CD8-positive, alpha-beta T cell (primary cell): ENCODE measurements at regions of chr2 and their contacts with region 1.

Region 1: GRCh38 chr2:173965329-173966025 is at the start of gene SP3:
- DNase-seq: peak; percentile 89 to 98 (median 96)
- ATAC-seq: peak; percentile 59
- H3K4me3 ChIP-seq: peak within 1 kb of the TSS; percentile 76 to 89
- H3K4me3 Mint-ChIP-seq: peak within 1 kb of the TSS; percentile 88
- H3K27ac ChIP-seq: peak within 1 kb of the TSS; percentile 86 to 96
- H3K27ac Mint-ChIP-seq: peak within 1 kb of the TSS; percentile 94
- H3K4me1 ChIP-seq: peaks cover 27% of the 10 kb centered on the region
- H3K4me1 Mint-ChIP-seq: peaks cover 33% of the 10 kb centered on the region
- H3K27me3 ChIP-seq: no peaks in the 10 kb centered on the region
- H3K27me3 Mint-ChIP-seq: no peaks in the 10 kb centered on the region
- CTCF ChIP-seq: no peak
- total RNA-seq, gene SP3: 166 to 169 TPM

Region 2: GRCh38 chr2:172972005-172972619 is 993.4 kb before region 1 on chr2:
- CTCF ChIA-PET with region 1: no interaction called
- POLR2A ChIA-PET with region 1: no interaction called
- intact Hi-C with region 1: loop called in 1 of 2 experiments (anchors 10 kb)
- DNase-seq: peak in 7 of 9 experiments; percentile 15 to 54 (median 25)
- ATAC-seq: peak; percentile 32
- H3K4me3 ChIP-seq: no peak overlapping the region
- H3K4me3 Mint-ChIP-seq: no peak overlapping the region
- H3K27ac ChIP-seq: no peak overlapping the region
- H3K27ac Mint-ChIP-seq: no peak overlapping the region
- H3K4me1 ChIP-seq: no peaks in the 10 kb centered on the region
- H3K4me1 Mint-ChIP-seq: peaks cover 18% of the 10 kb centered on the region
- H3K27me3 ChIP-seq: no peaks in the 10 kb centered on the region
- H3K27me3 Mint-ChIP-seq: peaks cover 4% of the 10 kb centered on the region
- CTCF ChIP-seq: peak; percentile 81

Region 3: DNA sequence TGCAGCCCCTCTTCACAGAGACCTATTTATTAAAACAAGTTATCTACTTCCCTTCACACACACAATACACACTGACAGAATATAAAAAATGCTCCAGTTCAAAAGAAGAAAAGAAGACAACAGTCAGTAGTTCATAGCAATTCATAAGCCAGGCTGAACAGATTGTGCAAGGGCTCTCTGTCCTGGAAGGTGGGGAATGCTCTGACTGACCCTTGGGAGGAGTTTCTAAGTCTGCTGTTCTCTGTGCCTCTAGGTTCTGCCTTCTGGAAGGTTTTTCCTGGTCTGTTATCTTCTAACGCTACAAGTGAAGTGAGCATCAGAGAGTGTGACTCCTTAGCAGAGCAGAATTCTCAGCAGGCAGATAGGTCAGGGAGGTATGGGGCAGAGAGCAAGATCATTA is 36.0 kb before region 1 on chr2:
- CTCF ChIA-PET with region 1: interaction called, 4 read pairs
- POLR2A ChIA-PET with region 1: no interaction called
- intact Hi-C with region 1: loop called (anchors 5 kb)
- DNase-seq: no peak
- ATAC-seq: no peak
- H3K4me3 ChIP-seq: no peak overlapping the region
- H3K4me3 Mint-ChIP-seq: no peak overlapping the region
- H3K27ac ChIP-seq: no peak overlapping the region
- H3K27ac Mint-ChIP-seq: peak overlapping the region; percentile 72
- H3K4me1 ChIP-seq: peaks cover 26% of the 10 kb centered on the region
- H3K4me1 Mint-ChIP-seq: peaks cover 74% of the 10 kb centered on the region
- H3K27me3 ChIP-seq: no peaks in the 10 kb centered on the region
- H3K27me3 Mint-ChIP-seq: no peaks in the 10 kb centered on the region
- CTCF ChIP-seq: no peak

Region 4: GRCh38 chr2:174004905-174005605 is 39.6 kb after region 1 on chr2:
- CTCF ChIA-PET with region 1: no interaction called
- POLR2A ChIA-PET with region 1: no interaction called
- intact Hi-C with region 1: loop called in 1 of 2 experiments (anchors 5 kb)
- DNase-seq: no peak
- ATAC-seq: no peak
- H3K4me3 ChIP-seq: no peak overlapping the region
- H3K4me3 Mint-ChIP-seq: no peak overlapping the region
- H3K27ac ChIP-seq: no peak overlapping the region
- H3K27ac Mint-ChIP-seq: no peak overlapping the region
- H3K4me1 ChIP-seq: no peaks in the 10 kb centered on the region
- H3K4me1 Mint-ChIP-seq: no peaks in the 10 kb centered on the region
- H3K27me3 ChIP-seq: no peaks in the 10 kb centered on the region
- H3K27me3 Mint-ChIP-seq: peaks cover 5% of the 10 kb centered on the region
- CTCF ChIP-seq: no peak

Region 5: GRCh38 chr2:174248187-174248997 is 282.9 kb after region 1 on chr2 and contains the start of gene OLA1:
- CTCF ChIA-PET with region 1: no interaction called
- POLR2A ChIA-PET with region 1: interaction called, 5 read pairs
- intact Hi-C with region 1: loop called (anchors 1 to 2 kb)
- DNase-seq: peak; percentile 90 to 98 (median 96)
- ATAC-seq: peak; percentile 96
- H3K4me3 ChIP-seq: peak within 1 kb of the TSS; percentile 78 to 94
- H3K4me3 Mint-ChIP-seq: peak within 1 kb of the TSS; percentile 84
- H3K27ac ChIP-seq: peak within 1 kb of the TSS; percentile 49 to 78
- H3K27ac Mint-ChIP-seq: peak within 1 kb of the TSS; percentile 80
- H3K4me1 ChIP-seq: peaks cover 6% of the 10 kb centered on the region
- H3K4me1 Mint-ChIP-seq: peaks cover 31% of the 10 kb centered on the region
- H3K27me3 ChIP-seq: no peaks in the 10 kb centered on the region
- H3K27me3 Mint-ChIP-seq: no peaks in the 10 kb centered on the region
- CTCF ChIP-seq: no peak
- total RNA-seq, gene OLA1: 35.3 to 38.8 TPM

Region 6: DNA sequence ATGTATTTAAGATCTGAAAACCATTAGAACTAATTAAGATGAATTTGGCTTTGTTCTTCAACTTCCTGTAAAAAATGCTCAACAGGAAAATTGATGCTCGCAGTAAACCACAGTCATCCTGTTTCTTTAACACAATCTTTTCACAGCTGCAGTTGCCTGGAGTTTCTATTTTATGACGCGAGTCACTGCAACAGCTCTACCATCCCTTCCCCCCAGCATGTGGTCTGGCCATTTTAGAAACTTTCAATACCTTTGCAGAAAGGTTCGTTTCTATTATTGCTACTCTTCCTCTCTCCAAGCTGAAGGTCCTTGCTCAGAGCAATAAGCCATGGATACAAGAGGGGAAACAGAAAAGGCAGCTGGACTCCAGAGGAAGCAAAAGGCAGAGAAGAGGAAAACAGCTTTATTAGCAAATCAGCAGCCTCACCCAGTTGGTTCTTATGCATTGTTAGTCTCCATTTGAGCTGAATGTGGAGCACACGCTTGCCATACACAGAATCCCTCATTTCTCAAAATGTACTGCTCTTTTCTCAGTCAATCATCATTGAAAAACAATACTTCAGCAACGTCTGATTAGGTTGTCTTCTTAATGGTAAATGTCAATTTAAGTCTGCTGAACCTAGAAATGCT is 628.2 kb after region 1 on chr2:
- CTCF ChIA-PET with region 1: no interaction called
- POLR2A ChIA-PET with region 1: no interaction called
- intact Hi-C with region 1: loop called (anchors 10 kb)
- DNase-seq: peak; percentile 34 to 95 (median 71)
- ATAC-seq: peak; percentile 67
- H3K4me3 ChIP-seq: peak overlapping the region; percentile 40 to 74
- H3K4me3 Mint-ChIP-seq: peak overlapping the region; percentile 87
- H3K27ac ChIP-seq: peak overlapping the region; percentile 65 to 91
- H3K27ac Mint-ChIP-seq: peak overlapping the region; percentile 99
- H3K4me1 ChIP-seq: peaks cover 46% of the 10 kb centered on the region
- H3K4me1 Mint-ChIP-seq: peaks cover 61% of the 10 kb centered on the region
- H3K27me3 ChIP-seq: no peaks in the 10 kb centered on the region
- H3K27me3 Mint-ChIP-seq: no peaks in the 10 kb centered on the region
- CTCF ChIP-seq: no peak